ENCODE measurements at regions of chr13 and their contacts with region 1.

Region 1: DNA sequence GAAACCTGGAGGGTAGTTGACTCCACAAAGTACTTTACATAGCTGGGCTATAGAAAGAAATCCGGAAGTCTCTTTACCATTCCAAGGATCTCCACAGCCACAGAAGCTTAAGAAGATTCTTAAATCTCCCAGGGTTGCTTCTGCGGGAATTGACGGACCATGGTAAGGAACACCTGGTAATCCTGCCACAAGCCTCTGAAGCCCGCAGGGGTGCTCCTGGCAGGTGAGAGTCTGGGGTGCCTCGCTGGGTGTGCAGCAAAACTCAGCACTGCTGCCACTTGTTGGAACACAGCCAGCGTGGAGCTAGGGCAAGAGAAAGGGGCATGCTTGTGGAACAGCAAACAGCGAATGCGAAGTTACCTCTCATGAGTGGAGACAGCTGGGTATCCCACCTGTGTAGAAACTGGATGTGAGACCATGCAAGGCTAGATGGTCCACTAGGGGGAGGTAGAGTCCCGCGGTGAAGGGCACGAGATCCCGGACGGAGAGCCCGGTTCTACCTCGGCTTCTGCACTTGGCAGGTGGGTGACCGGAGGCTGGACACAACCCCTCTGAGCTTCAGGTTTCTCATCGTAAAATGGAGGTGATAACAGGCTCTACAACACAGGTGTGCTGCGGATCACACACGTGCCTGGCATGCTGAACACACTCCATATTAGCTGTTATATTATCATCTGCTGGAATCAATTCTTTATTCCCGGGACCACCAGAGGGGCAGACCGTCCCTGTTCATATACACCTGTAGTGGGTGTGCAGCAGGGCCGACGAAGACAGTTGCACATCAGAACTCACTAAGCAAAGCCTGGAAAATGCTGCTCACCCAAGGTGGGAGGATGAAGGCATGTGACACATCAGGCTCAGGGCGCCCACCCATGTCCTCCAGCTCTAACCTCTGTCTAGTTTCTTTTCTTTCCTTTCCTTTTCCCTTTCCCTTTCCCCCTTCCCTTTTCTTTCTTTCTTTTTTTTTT is 24.1 kb upstream of the UBAC2 start:
- DNase-seq: peak; percentile 65

Region 2: GRCh38 chr13:98977568-98978265 is 198.9 kb before region 1 on chr13 and contains the start of gene DOCK9:
- in situ Hi-C with region 1: no loop called
- DNase-seq: no peak

Region 3: DNA sequence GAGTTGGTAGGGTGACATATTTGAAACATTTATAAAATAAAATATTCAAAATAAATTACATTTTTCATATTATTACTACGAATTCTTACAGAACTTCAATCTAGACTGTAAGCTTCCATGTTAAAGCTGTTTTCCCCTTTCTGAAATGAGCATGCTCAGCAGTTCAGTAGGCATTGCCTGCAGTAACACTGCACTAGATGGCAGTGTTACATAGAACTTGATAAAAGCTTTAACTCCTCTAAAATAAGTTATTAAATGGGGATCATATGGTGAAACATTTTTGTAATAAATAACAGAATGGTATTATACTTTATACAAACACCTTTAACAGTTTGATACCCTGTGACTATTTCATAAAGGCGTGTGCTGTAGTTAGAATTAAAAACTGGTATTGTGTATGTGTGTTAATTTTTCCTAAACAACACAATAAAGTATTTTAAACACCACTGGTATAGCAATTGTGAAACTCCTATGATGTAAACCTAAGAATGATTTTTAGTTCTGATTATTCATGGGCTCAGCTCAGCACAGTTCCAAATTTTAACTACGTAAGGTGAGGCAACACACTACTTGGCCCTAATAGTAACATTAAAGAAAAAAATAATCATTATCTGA is 93.1 kb after region 1 on chr13:
- in situ Hi-C with region 1: loop called (anchors 10 kb)
- DNase-seq: peak; percentile 43